ENCODE measurements at regions of chr6 and their contacts with region 1.

Region 1: DNA sequence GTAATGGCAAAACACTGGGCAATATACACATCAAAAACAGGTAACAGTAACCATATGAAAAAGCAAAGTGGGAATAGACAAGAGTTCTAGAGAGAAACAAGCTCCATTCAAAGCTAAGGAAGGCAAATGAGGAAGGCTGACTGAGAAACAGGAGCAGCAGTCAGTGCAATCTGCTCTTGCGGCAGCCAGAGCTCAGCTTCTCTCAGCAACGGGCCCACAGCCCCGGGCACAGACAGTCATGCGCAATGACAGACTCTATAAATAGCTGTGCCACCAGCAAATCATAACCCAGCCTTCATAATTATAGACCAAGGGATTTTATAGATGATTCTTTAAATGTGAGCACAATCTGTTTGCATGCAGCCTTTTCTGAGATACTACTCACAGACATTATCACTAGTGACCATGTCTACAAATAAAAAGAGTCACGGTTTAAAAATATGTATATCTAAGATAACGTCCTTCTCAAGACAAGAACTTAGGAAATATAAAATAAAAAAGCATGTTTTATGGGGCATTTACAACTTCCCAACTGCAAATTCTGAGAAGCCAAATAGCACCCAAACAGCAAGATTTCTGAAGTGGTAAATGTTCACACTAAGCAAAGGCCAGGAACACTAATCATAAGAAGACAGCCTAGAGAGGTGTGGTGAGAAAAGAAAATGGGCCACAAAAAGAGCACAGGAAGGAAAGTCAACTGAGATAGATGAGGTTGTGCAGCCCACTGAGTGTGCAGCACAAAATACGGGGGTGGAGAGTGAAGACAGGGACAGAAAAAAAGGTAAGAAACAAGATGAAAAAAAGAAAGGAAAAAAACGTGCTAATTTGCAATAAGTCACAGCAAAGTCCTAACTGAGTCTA is 39.9 kb upstream of the BEND6 start:
- DNase-seq: no peak
- CTCF ChIP-seq: no peak

Region 2: GRCh38 chr6:56101141-56101553 is 813.9 kb before region 1 on chr6:
- CTCF ChIA-PET with region 1: no interaction called
- POLR2A ChIA-PET with region 1: no interaction called
- DNase-seq: no peak
- CTCF ChIP-seq: no peak

Region 3: GRCh38 chr6:56927538-56928453 is 12.8 kb after region 1 on chr6:
- CTCF ChIA-PET with region 1: interaction called, 10 read pairs
- POLR2A ChIA-PET with region 1: no interaction called
- DNase-seq: no peak
- CTCF ChIP-seq: no peak

Region 4: DNA sequence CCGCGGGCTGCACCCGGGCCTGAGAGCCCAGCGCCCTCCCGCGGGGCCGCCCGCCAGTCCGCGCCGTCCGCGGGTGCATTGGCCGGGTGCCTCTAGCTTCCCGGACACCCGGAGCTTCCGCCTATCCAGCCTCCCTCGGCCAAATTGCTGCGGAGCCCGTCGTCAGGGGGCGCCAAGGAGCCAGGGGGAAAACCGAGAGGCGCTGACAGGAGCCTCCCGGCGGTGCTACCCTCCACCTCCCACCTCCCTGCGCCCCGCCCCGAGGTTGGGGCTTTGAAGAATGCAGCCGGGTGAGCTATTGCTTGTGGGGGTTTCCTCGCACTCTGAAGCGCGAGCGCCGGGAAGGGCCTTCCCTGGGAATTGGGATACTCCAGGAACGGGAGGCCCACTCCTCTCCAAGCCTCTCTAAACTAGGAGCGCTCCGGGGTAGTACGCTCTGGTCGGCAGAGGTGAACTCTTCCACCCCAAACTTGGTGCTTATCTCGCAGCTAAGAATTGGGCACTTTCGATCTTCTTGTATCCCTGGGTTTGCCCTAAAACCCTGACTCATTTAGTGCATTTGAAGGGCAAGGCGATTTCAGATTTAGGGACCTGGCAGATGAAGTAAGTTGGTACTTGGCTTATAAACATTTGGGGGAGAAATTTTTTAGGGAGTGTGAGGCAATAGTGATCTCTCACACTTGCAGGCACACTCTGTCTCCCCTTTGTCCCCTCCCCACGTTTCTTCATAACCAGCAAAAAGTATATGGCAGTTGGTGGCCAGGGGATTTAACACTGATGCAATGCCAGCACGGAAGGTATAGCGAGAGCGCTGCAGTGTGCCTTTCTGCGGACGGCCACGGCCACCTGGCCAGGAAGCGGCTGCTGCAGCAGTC is 40.4 kb after region 1 on chr6:
- CTCF ChIA-PET with region 1: interaction called, 11 read pairs
- POLR2A ChIA-PET with region 1: no interaction called
- DNase-seq: peak; percentile 85
- CTCF ChIP-seq: peak; percentile 82

Region 5: DNA sequence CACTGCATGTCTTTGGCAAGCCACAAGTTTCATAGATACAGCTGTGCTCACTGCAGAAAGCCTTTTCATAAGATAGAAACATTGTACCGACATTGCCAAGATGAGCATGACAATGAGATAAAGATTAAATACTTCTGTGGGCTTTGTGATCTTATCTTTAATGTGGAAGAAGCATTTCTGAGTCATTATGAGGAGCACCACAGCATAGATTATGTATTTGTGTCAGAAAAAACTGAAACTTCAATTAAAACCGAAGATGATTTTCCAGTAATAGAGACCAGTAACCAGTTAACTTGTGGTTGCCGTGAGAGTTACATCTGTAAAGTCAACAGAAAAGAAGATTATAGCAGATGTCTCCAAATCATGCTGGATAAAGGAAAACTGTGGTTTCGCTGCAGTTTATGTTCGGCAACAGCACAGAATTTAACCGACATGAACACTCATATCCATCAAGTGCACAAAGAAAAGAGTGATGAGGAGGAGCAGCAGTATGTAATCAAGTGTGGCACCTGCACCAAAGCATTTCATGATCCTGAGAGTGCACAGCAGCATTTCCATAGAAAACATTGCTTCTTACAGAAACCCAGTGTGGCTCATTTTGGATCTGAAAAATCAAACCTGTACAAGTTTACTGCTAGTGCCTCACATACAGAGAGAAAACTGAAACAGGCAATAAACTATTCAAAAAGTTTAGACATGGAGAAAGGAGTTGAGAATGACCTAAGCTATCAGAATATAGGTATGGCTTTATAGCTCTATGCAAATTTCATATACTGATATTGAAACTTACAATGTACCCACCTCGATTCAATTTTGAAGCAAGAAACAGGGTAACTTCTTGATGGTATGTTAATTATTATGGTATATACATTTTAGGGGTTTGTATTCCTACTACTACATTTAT is 233.2 kb after region 1 on chr6:
- CTCF ChIA-PET with region 1: no interaction called
- POLR2A ChIA-PET with region 1: no interaction called
- DNase-seq: no peak
- CTCF ChIP-seq: no peak